Mammary epithelial cell (primary cell): ENCODE measurements at regions of chr17 and their contacts with region 1.

Region 1: GRCh38 chr17:32319548-32319905 is 22.4 kb downstream of the C17orf75 start:
- DNase-seq: peak; percentile 41
- H3K4me3 ChIP-seq: no peak overlapping the region
- H3K27ac ChIP-seq: no peak overlapping the region
- H3K4me1 ChIP-seq: peaks cover 7% of the 10 kb centered on the region
- H3K27me3 ChIP-seq: no peaks in the 10 kb centered on the region
- CTCF ChIP-seq: peak; percentile 98 to 99

Region 2: DNA sequence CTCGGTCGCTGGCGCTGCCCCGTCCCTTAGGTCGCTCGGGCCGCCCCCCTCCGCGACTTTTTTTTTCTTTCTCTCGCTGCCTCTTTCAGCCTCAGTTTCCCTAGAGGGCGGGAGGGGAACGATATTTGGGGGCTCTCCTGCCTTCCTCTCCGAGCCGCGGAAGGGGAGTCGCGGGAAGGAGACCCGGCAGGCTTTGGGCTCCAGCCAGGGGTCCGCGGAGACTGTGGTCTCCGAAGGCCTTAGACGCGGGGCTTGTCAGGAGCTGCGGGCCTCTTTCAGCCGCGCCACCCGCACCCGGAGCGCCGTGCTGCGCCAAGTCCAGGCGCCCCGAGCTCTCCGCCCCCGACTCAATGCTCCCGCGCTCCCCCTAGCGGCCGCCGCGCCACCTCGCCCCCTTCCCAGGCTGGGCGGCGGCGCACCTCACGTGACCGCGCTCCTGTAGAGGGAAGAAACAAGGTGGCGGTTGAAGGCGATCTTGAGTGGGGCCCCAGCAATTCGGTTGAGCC is 312.5 kb before region 1 on chr17 and contains the start of gene LRRC37B:
- CTCF ChIA-PET with region 1: no interaction called
- dilution Hi-C with region 1: no loop called
- in situ Hi-C with region 1: no loop called
- intact Hi-C with region 1: loop called (anchors 10 kb)
- DNase-seq: peak; percentile 76
- H3K4me3 ChIP-seq: peak within 1 kb of the TSS; percentile 91 to 95 (median 94)
- H3K27ac ChIP-seq: peak within 1 kb of the TSS; percentile 30
- H3K4me1 ChIP-seq: no peaks in the 10 kb centered on the region
- H3K27me3 ChIP-seq: no peaks in the 10 kb centered on the region
- CTCF ChIP-seq: peak; percentile 51 to 87
- total RNA-seq, gene LRRC37B: 8.0 to 13.6 TPM

Region 3: GRCh38 chr17:32206861-32207260 is 112.7 kb before region 1 on chr17:
- CTCF ChIA-PET with region 1: no interaction called
- dilution Hi-C with region 1: no loop called
- in situ Hi-C with region 1: no loop called
- intact Hi-C with region 1: loop called (anchors 1 kb)
- DNase-seq: no peak
- H3K4me3 ChIP-seq: no peak overlapping the region
- H3K27ac ChIP-seq: no peak overlapping the region
- H3K4me1 ChIP-seq: no peaks in the 10 kb centered on the region
- H3K27me3 ChIP-seq: no peaks in the 10 kb centered on the region
- CTCF ChIP-seq: no peak

Region 4: DNA sequence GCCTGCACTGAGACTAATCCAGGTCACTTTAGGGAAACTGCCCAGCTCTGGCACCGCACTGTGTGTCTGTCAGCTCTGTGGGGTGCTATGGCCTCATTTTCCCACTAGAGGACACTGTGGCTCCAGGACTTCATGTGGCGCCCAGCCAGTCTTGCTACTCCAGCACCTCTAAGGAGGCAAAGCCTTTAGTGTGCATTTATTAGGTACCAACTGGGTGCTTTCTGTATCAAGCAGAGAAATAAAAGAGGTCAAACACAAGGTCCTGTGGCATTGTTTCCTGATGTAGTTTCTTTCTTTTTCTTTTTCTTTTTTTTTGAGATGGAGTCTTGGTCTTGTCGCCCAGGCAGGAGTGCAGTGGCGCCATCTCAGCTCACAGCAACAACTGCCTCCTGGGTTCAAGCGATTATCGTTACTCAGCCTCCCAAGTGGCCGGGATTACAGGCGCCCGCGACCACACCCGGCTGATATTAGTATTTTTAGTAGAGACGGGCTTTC is 66.4 kb before region 1 on chr17:
- CTCF ChIA-PET with region 1: interaction called, 4 read pairs
- dilution Hi-C with region 1: no loop called
- in situ Hi-C with region 1: no loop called
- intact Hi-C with region 1: loop called (anchors 1 kb)
- DNase-seq: peak; percentile 61
- H3K4me3 ChIP-seq: no peak overlapping the region
- H3K27ac ChIP-seq: no peak overlapping the region
- H3K4me1 ChIP-seq: no peaks in the 10 kb centered on the region
- H3K27me3 ChIP-seq: peaks cover 2% of the 10 kb centered on the region
- CTCF ChIP-seq: peak; percentile 100

Region 5: DNA sequence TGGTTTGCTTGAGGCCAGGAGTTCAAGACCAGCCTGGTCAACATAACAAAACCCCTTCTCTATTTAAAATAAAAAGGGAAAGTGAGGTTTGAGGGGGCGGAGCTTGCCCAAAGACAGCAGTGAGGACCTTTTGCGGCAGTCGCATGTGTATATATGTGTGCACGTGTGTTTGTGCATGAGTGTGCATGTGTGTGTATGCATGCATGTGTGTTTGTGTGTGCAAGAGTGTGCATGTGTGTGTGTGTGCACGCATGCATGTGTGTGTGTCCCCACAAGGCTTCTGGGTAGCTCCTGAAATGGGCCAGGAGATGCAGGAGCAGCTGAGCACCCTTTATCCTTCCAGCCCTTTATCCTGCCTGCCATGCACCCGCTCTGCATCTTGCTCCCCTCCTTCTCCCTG is 44.9 kb before region 1 on chr17:
- CTCF ChIA-PET with region 1: no interaction called
- dilution Hi-C with region 1: loop called (anchors 5 kb)
- in situ Hi-C with region 1: no loop called
- intact Hi-C with region 1: no loop called
- DNase-seq: no peak
- H3K4me3 ChIP-seq: no peak overlapping the region
- H3K27ac ChIP-seq: no peak overlapping the region
- H3K4me1 ChIP-seq: no peaks in the 10 kb centered on the region
- H3K27me3 ChIP-seq: no peaks in the 10 kb centered on the region
- CTCF ChIP-seq: no peak

Region 6: DNA sequence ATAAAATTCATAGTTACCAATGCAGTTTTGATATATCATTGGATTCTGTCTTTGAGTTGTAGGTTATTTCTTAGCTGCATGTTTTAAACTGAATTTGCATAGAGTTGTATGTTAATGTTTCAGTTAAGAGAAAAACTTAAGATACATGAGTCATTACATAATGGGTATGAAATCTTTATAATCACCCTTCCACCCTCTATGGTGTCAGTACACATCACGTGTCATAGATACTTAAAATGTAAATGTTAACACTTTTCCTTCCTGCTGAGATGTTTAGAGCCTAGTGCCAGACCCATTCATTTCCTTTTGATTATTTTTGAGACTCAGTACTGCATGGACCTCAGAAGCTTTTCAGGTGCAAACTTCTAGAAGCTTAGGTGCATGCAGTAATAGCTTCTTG is 50.9 kb after region 1 on chr17:
- CTCF ChIA-PET with region 1: no interaction called
- dilution Hi-C with region 1: loop called (anchors 5 kb)
- in situ Hi-C with region 1: no loop called
- intact Hi-C with region 1: no loop called
- DNase-seq: no peak
- H3K4me3 ChIP-seq: no peak overlapping the region
- H3K27ac ChIP-seq: no peak overlapping the region
- H3K4me1 ChIP-seq: no peaks in the 10 kb centered on the region
- H3K27me3 ChIP-seq: no peaks in the 10 kb centered on the region
- CTCF ChIP-seq: no peak

Region 7: GRCh38 chr17:32491371-32492263 is 172.1 kb after region 1 on chr17:
- CTCF ChIA-PET with region 1: interaction called, 10 read pairs
- dilution Hi-C with region 1: no loop called
- in situ Hi-C with region 1: no loop called
- intact Hi-C with region 1: no loop called
- DNase-seq: no peak
- H3K4me3 ChIP-seq: no peak overlapping the region
- H3K27ac ChIP-seq: no peak overlapping the region
- H3K4me1 ChIP-seq: peaks cover 39% of the 10 kb centered on the region
- H3K27me3 ChIP-seq: no peaks in the 10 kb centered on the region
- CTCF ChIP-seq: no peak

Region 8: GRCh38 chr17:32515677-32516383 is 196.3 kb after region 1 on chr17:
- CTCF ChIA-PET with region 1: no interaction called
- dilution Hi-C with region 1: no loop called
- in situ Hi-C with region 1: no loop called
- intact Hi-C with region 1: no loop called
- DNase-seq: no peak
- H3K4me3 ChIP-seq: no peak overlapping the region
- H3K27ac ChIP-seq: no peak overlapping the region
- H3K4me1 ChIP-seq: peaks cover 13% of the 10 kb centered on the region
- H3K27me3 ChIP-seq: no peaks in the 10 kb centered on the region
- CTCF ChIP-seq: no peak